Sciatic nerve (tissue), 2 donors: ENCODE measurements at regions of chr15 and their contacts with region 1.

Region 1: GRCh38 chr15:33675246-33675645 is 293.1 kb upstream of the CHRM5 start:
- DNase-seq: no peak
- ATAC-seq: no peak

Region 2: GRCh38 chr15:33539825-33540573 is 135.2 kb before region 1 on chr15:
- intact Hi-C with region 1: loop called (anchors 10 kb)
- DNase-seq: no peak
- ATAC-seq: no peak

Region 3: GRCh38 chr15:35583863-35584528 is 1908.8 kb after region 1 on chr15:
- intact Hi-C with region 1: no loop called
- DNase-seq: no peak
- ATAC-seq: peak; percentile 44